ENCODE measurements at regions of chrX and their contacts with region 1.

Region 1: GRCh38 chrX:154317391-154317995 is 21.9 kb downstream of the TKTL1 start:
- DNase-seq: no peak
- ATAC-seq: no peak
- H3K4me3 Mint-ChIP-seq: no peak overlapping the region
- H3K27ac Mint-ChIP-seq: no peak overlapping the region
- H3K4me1 Mint-ChIP-seq: peaks cover 29% of the 10 kb centered on the region
- H3K27me3 Mint-ChIP-seq: no peaks in the 10 kb centered on the region
- CTCF ChIP-seq: no peak

Region 2: GRCh38 chrX:154136627-154137161 is 180.8 kb before region 1 on chrX:
- CTCF ChIA-PET with region 1: interaction called, 4 read pairs
- POLR2A ChIA-PET with region 1: no interaction called
- intact Hi-C with region 1: loop called (anchors 5 kb)
- DNase-seq: peak; percentile 71
- ATAC-seq: peak; percentile 90
- H3K4me3 Mint-ChIP-seq: peak overlapping the region; percentile 81
- H3K27ac Mint-ChIP-seq: peak overlapping the region; percentile 83
- H3K4me1 Mint-ChIP-seq: peaks cover 14% of the 10 kb centered on the region
- H3K27me3 Mint-ChIP-seq: no peaks in the 10 kb centered on the region
- CTCF ChIP-seq: no peak

Region 3: GRCh38 chrX:154329294-154329693 is 11.8 kb after region 1 on chrX:
- CTCF ChIA-PET with region 1: interaction called, 3 read pairs
- POLR2A ChIA-PET with region 1: no interaction called
- intact Hi-C with region 1: loop called (anchors 1 kb)
- DNase-seq: no peak
- ATAC-seq: no peak
- H3K4me3 Mint-ChIP-seq: no peak overlapping the region
- H3K27ac Mint-ChIP-seq: no peak overlapping the region
- H3K4me1 Mint-ChIP-seq: peaks cover 38% of the 10 kb centered on the region
- H3K27me3 Mint-ChIP-seq: no peaks in the 10 kb centered on the region
- CTCF ChIP-seq: no peak

Region 4: DNA sequence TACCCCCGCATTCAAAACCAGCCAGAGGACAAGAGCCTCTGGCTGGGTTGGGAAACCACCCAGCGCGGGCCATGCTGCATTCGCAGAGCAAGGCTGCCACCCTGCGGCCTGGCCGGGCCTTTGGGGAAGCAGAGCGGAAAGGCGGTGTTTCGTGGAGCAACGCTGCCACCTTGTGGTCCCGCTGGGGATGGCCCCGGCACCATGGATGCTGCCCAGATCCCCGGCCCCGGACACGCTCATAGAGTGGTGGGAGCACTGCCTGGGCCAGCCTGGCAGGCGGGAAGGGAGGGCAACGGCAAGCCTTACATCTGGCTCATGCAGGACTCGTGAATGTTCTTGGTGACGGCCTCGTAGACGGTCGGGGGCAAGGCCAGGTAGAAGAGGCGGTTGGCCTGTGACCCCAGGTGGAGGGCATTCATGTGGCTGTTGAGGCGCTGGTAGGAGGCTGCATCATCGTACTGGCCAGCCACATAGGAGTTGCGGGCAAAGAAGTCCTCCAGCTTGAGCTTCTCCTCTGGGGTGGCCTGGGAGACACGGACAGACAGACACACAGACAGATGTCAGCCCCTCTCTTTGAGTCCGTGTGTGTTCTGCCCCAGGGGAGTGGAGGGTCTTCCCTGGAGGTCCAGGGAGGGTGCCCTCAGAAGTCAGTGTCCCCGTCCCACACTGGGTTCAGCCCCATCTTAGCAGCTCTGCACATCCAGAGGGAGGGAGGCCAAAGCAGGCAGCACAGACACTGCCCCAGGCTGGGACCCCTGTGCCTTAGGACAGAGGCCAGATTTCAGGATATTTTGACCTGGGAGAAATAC is 217.6 kb after region 1 on chrX:
- CTCF ChIA-PET with region 1: no interaction called
- POLR2A ChIA-PET with region 1: no interaction called
- intact Hi-C with region 1: loop called (anchors 2 kb)
- DNase-seq: peak; percentile 77
- ATAC-seq: peak; percentile 96
- H3K4me3 Mint-ChIP-seq: no peak overlapping the region
- H3K27ac Mint-ChIP-seq: peak overlapping the region; percentile 50
- H3K4me1 Mint-ChIP-seq: peaks cover 3% of the 10 kb centered on the region
- H3K27me3 Mint-ChIP-seq: no peaks in the 10 kb centered on the region
- CTCF ChIP-seq: peak; percentile 30